CD4-positive, alpha-beta memory T cell (primary cell): ENCODE measurements at regions of chr14 and their contacts with region 1.

Region 1: GRCh38 chr14:93184388-93185353 is at the starts of genes LYSET and MOAP1:
- DNase-seq: peak; percentile 91 to 94 (median 93)
- H3K4me3 ChIP-seq: peak within 1 kb of the TSS; percentile 82 to 93
- H3K4me3 Mint-ChIP-seq: peak within 1 kb of the TSS; percentile 89 to 97 (median 94)
- H3K27ac ChIP-seq: peak within 1 kb of the TSS; percentile 98
- H3K27ac Mint-ChIP-seq: peak within 1 kb of the TSS; percentile 92 to 98 (median 97)
- H3K4me1 ChIP-seq: peaks cover 37% of the 10 kb centered on the region
- H3K4me1 Mint-ChIP-seq: peaks cover 29 to 41% (median 37%) of the 10 kb centered on the region in 4 donors
- H3K27me3 ChIP-seq: no peaks in the 10 kb centered on the region
- H3K27me3 Mint-ChIP-seq: no peaks in the 10 kb centered on the region
- total RNA-seq, gene LYSET: 20.2 to 24.0 TPM
- total RNA-seq, gene MOAP1: 39.0 to 39.9 TPM

Region 2: GRCh38 chr14:92793709-92794546 is 390.7 kb before region 1 on chr14 and contains the start of gene GOLGA5:
- CTCF ChIA-PET with region 1: no interaction called
- POLR2A ChIA-PET with region 1: interaction called, 3 read pairs
- intact Hi-C with region 1: loop called (anchors 10 kb)
- DNase-seq: peak; percentile 97 to 100 (median 99)
- H3K4me3 ChIP-seq: peak within 1 kb of the TSS; percentile 67 to 94
- H3K4me3 Mint-ChIP-seq: peak within 1 kb of the TSS; percentile 84 to 98 (median 96)
- H3K27ac ChIP-seq: peak within 1 kb of the TSS; percentile 85
- H3K27ac Mint-ChIP-seq: peak within 1 kb of the TSS; percentile 77 to 98 (median 95)
- H3K4me1 ChIP-seq: peaks cover 30% of the 10 kb centered on the region
- H3K4me1 Mint-ChIP-seq: peaks cover 26 to 46% (median 35%) of the 10 kb centered on the region in 4 donors
- H3K27me3 ChIP-seq: no peaks in the 10 kb centered on the region
- H3K27me3 Mint-ChIP-seq: no peaks in the 10 kb centered on the region
- total RNA-seq, gene GOLGA5: 27.4 to 29.8 TPM

Region 3: GRCh38 chr14:93103392-93104080 is 81.1 kb before region 1 on chr14:
- CTCF ChIA-PET with region 1: interaction called, 3 read pairs
- POLR2A ChIA-PET with region 1: interaction called, 16 read pairs
- intact Hi-C with region 1: no loop called
- DNase-seq: peak; percentile 55 to 83 (median 66)
- H3K4me3 ChIP-seq: peak overlapping the region; percentile 9 to 30
- H3K4me3 Mint-ChIP-seq: peak overlapping the region; percentile 85 to 94 (median 88)
- H3K27ac ChIP-seq: peak overlapping the region; percentile 62
- H3K27ac Mint-ChIP-seq: peak overlapping the region; percentile 90 to 97 (median 93)
- H3K4me1 ChIP-seq: peaks cover 19% of the 10 kb centered on the region
- H3K4me1 Mint-ChIP-seq: peaks cover 11 to 45% (median 24%) of the 10 kb centered on the region in 4 donors
- H3K27me3 ChIP-seq: no peaks in the 10 kb centered on the region
- H3K27me3 Mint-ChIP-seq: no peaks in the 10 kb centered on the region

Region 4: DNA sequence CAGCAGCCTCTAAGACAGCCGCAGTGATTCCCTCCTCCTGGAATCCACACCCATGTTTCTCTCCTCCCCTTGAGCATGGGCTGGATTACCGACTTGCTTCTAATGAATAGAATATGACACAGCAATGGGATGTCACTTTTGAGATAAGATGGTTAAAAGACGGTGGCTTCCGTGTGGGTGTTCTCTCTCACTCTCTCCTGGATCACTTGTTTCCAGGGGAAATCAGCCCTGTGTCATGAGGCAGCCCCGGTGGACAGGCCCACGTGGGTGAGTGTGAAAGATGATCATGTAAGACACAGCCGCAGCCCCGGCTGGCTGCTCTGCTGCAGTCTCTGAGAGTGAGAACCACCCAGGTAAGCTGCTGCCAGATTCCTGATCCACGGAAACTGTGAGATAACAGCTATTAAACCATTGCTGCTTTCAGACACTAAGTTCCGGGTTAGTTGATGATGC is 10.7 kb before region 1 on chr14:
- CTCF ChIA-PET with region 1: interaction called, 15 read pairs
- POLR2A ChIA-PET with region 1: interaction called, 3 read pairs
- intact Hi-C with region 1: no loop called
- DNase-seq: no peak
- H3K4me3 ChIP-seq: no peak overlapping the region
- H3K4me3 Mint-ChIP-seq: no peak overlapping the region
- H3K27ac ChIP-seq: no peak overlapping the region
- H3K27ac Mint-ChIP-seq: no peak overlapping the region
- H3K4me1 ChIP-seq: no peaks in the 10 kb centered on the region
- H3K4me1 Mint-ChIP-seq: peaks cover 0 to 6% (median 4%) of the 10 kb centered on the region in 4 donors
- H3K27me3 ChIP-seq: no peaks in the 10 kb centered on the region
- H3K27me3 Mint-ChIP-seq: no peaks in the 10 kb centered on the region

Region 5: GRCh38 chr14:93206793-93207467 is 22.3 kb after region 1 on chr14 and contains the starts of genes GON7 and UBR7:
- CTCF ChIA-PET with region 1: interaction called, 41 read pairs
- POLR2A ChIA-PET with region 1: interaction called, 85 read pairs
- intact Hi-C with region 1: loop called (anchors 1 kb)
- DNase-seq: peak; percentile 81 to 91 (median 85)
- H3K4me3 ChIP-seq: peak within 1 kb of the TSS; percentile 73 to 99
- H3K4me3 Mint-ChIP-seq: peak within 1 kb of the TSS; percentile 89 to 99 (median 97)
- H3K27ac ChIP-seq: peak within 1 kb of the TSS; percentile 77
- H3K27ac Mint-ChIP-seq: peak within 1 kb of the TSS; percentile 90 to 97 (median 96)
- H3K4me1 ChIP-seq: peaks cover 42% of the 10 kb centered on the region
- H3K4me1 Mint-ChIP-seq: peaks cover 27 to 50% (median 38%) of the 10 kb centered on the region in 4 donors
- H3K27me3 ChIP-seq: no peaks in the 10 kb centered on the region
- H3K27me3 Mint-ChIP-seq: no peaks in the 10 kb centered on the region
- total RNA-seq, gene GON7: 11.6 to 12.7 TPM
- total RNA-seq, gene UBR7: 17.5 to 17.8 TPM

Region 6: DNA sequence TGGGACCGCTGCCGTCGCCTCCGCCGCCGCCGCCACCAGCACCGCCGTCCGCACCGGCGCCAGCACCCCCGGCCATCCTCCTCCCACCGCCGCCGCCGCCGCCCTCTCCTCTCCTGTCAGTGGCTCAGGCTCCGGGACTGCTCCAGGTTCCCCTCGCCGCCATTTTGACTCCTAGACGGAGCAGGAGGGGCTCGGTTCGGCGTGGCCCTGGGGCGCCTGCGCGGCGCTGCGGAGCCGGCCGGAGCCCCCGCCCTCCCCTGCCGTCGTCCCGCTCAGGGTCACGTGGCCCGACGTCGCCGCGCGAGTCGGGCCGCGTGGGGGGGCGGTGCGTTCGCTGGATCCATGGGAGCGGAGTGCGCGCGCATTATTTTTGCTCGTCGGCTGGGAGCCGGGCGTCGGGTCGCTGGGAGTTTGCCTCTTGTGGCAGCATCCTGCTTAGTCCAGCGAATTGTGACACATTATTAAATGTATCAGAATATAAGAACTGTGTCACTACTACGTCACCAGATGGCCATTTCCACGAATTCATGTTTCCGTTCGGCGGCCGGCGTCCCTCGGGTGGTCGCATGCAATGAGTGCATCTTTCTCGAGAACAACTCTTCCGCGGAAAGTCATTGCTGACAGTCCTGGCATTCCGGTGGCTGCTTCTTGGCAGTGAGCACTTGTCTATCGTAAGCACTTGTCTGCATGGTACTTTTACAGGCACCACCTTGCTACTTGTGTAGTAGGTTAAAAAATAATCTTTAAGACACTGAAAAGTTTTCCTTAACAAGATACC is 148.4 kb after region 1 on chr14 and contains the start of gene BTBD7:
- CTCF ChIA-PET with region 1: no interaction called
- POLR2A ChIA-PET with region 1: interaction called, 3 read pairs
- intact Hi-C with region 1: loop called (anchors 1 kb)
- DNase-seq: peak; percentile 92 to 94 (median 93)
- H3K4me3 ChIP-seq: peak within 1 kb of the TSS; percentile 59 to 96
- H3K4me3 Mint-ChIP-seq: peak within 1 kb of the TSS; percentile 92 to 98 (median 94)
- H3K27ac ChIP-seq: peak within 1 kb of the TSS; percentile 83
- H3K27ac Mint-ChIP-seq: peak within 1 kb of the TSS; percentile 92 to 97 (median 96)
- H3K4me1 ChIP-seq: peaks cover 32% of the 10 kb centered on the region
- H3K4me1 Mint-ChIP-seq: peaks cover 33 to 59% (median 39%) of the 10 kb centered on the region in 4 donors
- H3K27me3 ChIP-seq: no peaks in the 10 kb centered on the region
- H3K27me3 Mint-ChIP-seq: no peaks in the 10 kb centered on the region
- total RNA-seq, gene BTBD7: 30.3 to 38.3 TPM